ENCODE measurements at regions of chr7 and their contacts with region 1.

Region 1: GRCh38 chr7:123871998-123872867 is 27.3 kb downstream of the HYAL4 start:
- DNase-seq: peak; percentile 35
- CTCF ChIP-seq: peak; percentile 79

Region 2: DNA sequence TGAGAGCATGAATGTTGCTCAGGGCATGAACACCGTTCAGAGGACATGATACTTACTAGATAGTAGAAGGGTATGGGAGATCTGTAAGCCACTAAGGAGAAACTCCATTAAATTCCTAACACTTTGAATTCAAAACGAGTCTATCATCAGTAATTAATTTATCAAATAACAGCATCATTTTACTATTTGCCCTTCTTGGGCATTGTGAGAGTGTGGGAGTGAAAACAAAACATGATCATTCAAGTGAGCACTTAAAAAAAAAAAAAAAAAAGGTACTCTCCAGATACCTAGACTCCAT is 291.1 kb before region 1 on chr7:
- CTCF ChIA-PET with region 1: interaction called, 11 read pairs
- POLR2A ChIA-PET with region 1: no interaction called
- DNase-seq: no peak
- CTCF ChIP-seq: no peak

Region 3: GRCh38 chr7:123682690-123683089 is 189.5 kb before region 1 on chr7:
- CTCF ChIA-PET with region 1: interaction called, 21 read pairs
- POLR2A ChIA-PET with region 1: no interaction called
- DNase-seq: no peak
- CTCF ChIP-seq: peak; percentile 41

Region 4: DNA sequence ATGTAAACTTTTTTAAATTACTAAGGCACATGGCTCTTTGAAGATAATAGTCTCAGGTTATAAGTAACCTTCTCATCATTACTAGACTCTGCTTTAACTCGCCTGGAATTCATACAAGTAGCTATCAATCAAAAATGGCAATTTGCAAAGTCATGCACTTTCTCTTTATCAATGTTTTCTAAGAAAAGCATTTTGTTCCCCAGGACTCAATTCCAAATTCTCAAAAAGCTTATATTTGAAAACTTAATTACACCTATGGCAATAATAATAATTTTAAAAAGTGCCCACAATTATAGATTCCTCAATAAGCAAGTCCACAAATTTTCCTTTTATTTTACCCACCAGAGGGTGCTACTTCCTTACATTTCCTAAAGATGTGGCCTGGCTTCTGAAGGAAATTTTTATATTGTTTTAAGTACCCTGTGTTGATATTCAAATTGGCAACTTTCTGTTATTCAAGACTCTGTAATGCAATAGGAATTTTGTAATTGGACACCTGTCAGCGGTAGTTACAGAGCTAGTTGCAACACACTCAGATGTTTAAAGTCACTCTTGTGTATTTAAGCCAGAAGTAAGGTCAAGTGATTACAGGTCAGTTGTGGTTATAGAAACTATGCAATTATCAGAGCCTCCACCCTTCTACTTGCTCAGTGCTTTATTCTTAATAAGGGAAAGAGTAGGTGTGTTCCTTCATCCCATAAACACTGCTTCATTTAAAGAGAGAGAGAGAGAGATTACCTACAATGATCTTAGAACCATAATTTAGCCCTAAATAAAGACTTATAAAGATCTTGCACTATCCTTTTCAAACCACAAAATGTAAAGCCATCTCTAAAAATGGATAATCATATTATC is 74.3 kb before region 1 on chr7:
- CTCF ChIA-PET with region 1: interaction called, 109 read pairs
- POLR2A ChIA-PET with region 1: no interaction called
- DNase-seq: peak; percentile 17
- CTCF ChIP-seq: peak; percentile 38

Region 5: DNA sequence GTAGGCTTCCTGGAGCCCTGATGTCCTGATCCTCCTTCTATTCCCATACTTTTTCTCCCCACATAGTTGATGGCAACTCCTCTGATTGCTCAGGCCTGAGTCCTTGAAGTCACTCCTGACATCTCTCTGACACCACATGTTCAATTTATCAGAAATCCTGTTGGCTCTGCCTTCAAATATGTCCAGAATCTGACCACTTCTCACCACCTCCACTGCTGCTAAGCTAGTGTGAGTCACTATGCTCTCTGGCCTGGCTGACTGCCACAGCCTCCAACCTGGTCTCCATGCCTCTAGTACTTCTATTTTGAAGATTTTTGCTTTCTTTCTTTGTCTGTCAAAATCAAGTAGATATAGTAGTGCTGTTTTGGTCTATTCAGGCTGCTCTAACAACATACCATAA is 107.6 kb after region 1 on chr7:
- CTCF ChIA-PET with region 1: no interaction called
- POLR2A ChIA-PET with region 1: no interaction called
- DNase-seq: no peak
- CTCF ChIP-seq: no peak

Measured in GM10248 (cell line).